ENCODE measurements at regions of chr1 and their contacts with region 1.

Region 1: GRCh38 chr1:45569962-45570581 is 13.8 kb upstream of the NASP start:
- DNase-seq: peak; percentile 65
- ATAC-seq: peak; percentile 81
- H3K4me3 ChIP-seq: no peak overlapping the region
- H3K27ac ChIP-seq: no peak overlapping the region
- H3K4me1 ChIP-seq: no peaks in the 10 kb centered on the region
- H3K27me3 ChIP-seq: no peaks in the 10 kb centered on the region
- CTCF ChIP-seq: peak; percentile 96
- EP300 ChIP-seq: no peak
- POLR2A ChIP-seq: peak in 1 of 2 experiments; percentile 29; a peak in 1 of 4 replicates
- RAD21 ChIP-seq: peak; percentile 87

Region 2: GRCh38 chr1:45359882-45360513 is 210.1 kb before region 1 on chr1:
- CTCF ChIA-PET with region 1: interaction called, 3 read pairs
- POLR2A ChIA-PET with region 1: no interaction called
- in situ Hi-C with region 1: loop called (anchors 25 kb)
- intact Hi-C with region 1: loop called (anchors 5 kb)
- DNase-seq: peak; percentile 40
- ATAC-seq: peak; percentile 47
- H3K4me3 ChIP-seq: no peak overlapping the region
- H3K27ac ChIP-seq: no peak overlapping the region
- H3K4me1 ChIP-seq: peaks cover 32% of the 10 kb centered on the region
- H3K27me3 ChIP-seq: no peaks in the 10 kb centered on the region
- CTCF ChIP-seq: peak; percentile 53
- EP300 ChIP-seq: no peak
- POLR2A ChIP-seq: no peak
- RAD21 ChIP-seq: peak; percentile 46; the same call in 1 of the 2 replicates

Region 3: GRCh38 chr1:45458894-45459293 is 111.2 kb before region 1 on chr1:
- CTCF ChIA-PET with region 1: no interaction called
- POLR2A ChIA-PET with region 1: no interaction called
- in situ Hi-C with region 1: no loop called
- intact Hi-C with region 1: no loop called
- DNase-seq: no peak
- ATAC-seq: no peak
- H3K4me3 ChIP-seq: no peak overlapping the region
- H3K27ac ChIP-seq: no peak overlapping the region
- H3K4me1 ChIP-seq: peaks cover 6% of the 10 kb centered on the region; the same call in 1 of the 2 replicates
- H3K27me3 ChIP-seq: no peaks in the 10 kb centered on the region
- CTCF ChIP-seq: no peak
- EP300 ChIP-seq: no peak
- POLR2A ChIP-seq: no peak
- RAD21 ChIP-seq: no peak

Region 4: GRCh38 chr1:45535988-45536766 is 33.9 kb before region 1 on chr1:
- CTCF ChIA-PET with region 1: no interaction called
- POLR2A ChIA-PET with region 1: no interaction called
- in situ Hi-C with region 1: no loop called
- intact Hi-C with region 1: no loop called
- DNase-seq: no peak
- ATAC-seq: peak; percentile 31; the same call in 2 of the 3 replicates
- H3K4me3 ChIP-seq: no peak overlapping the region
- H3K27ac ChIP-seq: no peak overlapping the region
- H3K4me1 ChIP-seq: peaks cover 37% of the 10 kb centered on the region
- H3K27me3 ChIP-seq: no peaks in the 10 kb centered on the region
- CTCF ChIP-seq: no peak
- EP300 ChIP-seq: no peak
- POLR2A ChIP-seq: no peak
- RAD21 ChIP-seq: no peak